AG04450 (cell line): ENCODE measurements at regions of chr10 and their contacts with region 1.

Region 1: GRCh38 chr10:69786791-69787190 is 14.9 kb upstream of the COL13A1 start:
- DNase-seq: no peak
- H3K4me3 ChIP-seq: no peak overlapping the region
- H3K27ac ChIP-seq: no peak overlapping the region
- H3K27me3 ChIP-seq: peaks cover 32% of the 10 kb centered on the region
- CTCF ChIP-seq: peak; percentile 54

Region 2: GRCh38 chr10:69749178-69750010 is 37.4 kb before region 1 on chr10:
- CTCF ChIA-PET with region 1: no interaction called
- POLR2A ChIA-PET with region 1: no interaction called
- DNase-seq: no peak
- H3K4me3 ChIP-seq: no peak overlapping the region
- H3K27ac ChIP-seq: no peak overlapping the region
- H3K27me3 ChIP-seq: no peaks in the 10 kb centered on the region
- CTCF ChIP-seq: no peak

Region 3: GRCh38 chr10:69807122-69807521 is 20.3 kb after region 1 on chr10:
- CTCF ChIA-PET with region 1: interaction called, 14 read pairs
- POLR2A ChIA-PET with region 1: no interaction called
- DNase-seq: peak; percentile 41
- H3K4me3 ChIP-seq: no peak overlapping the region
- H3K27ac ChIP-seq: peak overlapping the region; percentile 63
- H3K27me3 ChIP-seq: no peaks in the 10 kb centered on the region
- CTCF ChIP-seq: no peak

Region 4: DNA sequence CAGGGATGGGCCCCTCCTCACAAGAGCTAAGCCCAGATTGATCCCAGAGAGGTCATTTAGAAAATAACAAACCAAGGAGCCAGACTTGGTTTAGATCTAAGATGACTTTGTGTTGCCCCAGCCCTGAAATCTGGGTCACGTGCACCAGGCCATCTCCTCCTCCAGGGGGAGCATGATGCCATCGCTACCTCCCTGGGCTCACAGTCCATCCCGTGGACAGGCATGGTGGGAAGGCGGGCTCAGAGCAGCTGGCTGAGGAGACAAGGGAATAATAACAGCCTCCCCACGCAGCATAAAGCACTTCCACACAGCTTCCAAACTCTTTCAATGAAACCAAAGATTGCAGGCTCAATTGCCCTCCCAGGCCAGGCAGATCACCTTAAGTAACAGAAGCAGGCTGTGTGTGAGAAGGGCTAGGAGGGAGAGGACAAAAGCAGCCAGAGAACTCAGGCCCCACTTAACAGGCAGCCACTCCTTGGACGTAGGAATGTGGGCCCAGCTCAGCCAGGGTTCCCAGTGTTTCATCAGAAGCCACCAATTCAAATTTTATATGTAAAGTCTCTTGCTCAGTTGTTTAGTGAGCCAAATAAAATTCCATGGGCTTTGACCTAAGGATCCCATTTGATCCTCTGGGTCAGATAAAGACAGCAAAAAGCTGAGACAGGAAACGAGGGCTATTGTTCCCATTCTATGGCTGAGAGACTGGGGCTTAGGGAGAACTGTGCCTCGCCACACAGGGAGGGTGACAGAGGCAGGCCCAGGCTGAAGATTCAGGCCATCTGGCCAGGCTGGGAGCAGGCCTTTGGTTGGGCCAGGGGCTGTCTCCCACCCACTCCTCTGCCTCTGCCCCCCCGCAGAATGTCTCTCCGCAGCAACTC is 115.1 kb after region 1 on chr10:
- CTCF ChIA-PET with region 1: interaction called, 10 read pairs
- POLR2A ChIA-PET with region 1: no interaction called
- DNase-seq: peak; percentile 11
- H3K4me3 ChIP-seq: no peak overlapping the region
- H3K27ac ChIP-seq: no peak overlapping the region
- H3K27me3 ChIP-seq: no peaks in the 10 kb centered on the region
- CTCF ChIP-seq: peak; percentile 74